Ovary (tissue), 10 donors: ENCODE measurements at regions of chr18 and their contacts with region 1.

Region 1: DNA sequence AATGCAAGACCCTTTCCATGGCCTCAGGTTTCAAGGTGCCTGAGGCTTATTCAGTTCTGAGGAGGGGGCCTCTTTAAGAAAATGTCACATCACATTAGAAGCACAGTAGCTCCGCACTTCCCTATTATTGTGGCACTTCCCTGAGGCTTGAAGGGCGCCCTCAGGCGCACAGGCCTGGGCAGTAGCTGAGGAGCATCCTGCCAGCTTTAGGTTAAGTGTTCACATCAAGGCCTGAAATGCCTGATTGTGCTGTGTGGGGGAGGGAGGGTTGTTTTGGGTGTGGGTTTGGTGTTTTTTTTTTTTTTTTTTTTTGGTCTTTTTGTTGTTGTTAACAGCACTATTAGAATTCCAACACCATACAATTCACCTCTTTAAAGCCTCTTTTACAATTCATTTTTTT is 107.9 kb downstream of the CABLES1 start:
- DNase-seq: no peak
- H3K4me3 ChIP-seq: no peak overlapping the region
- H3K27ac ChIP-seq: no peak overlapping the region
- H3K4me1 ChIP-seq: peaks cover 5% of the 10 kb centered on the region
- H3K27me3 ChIP-seq: no peaks in the 10 kb centered on the region
- CTCF ChIP-seq: no peak
- EP300 ChIP-seq: no peak
- POLR2A ChIP-seq: no peak

Region 2: DNA sequence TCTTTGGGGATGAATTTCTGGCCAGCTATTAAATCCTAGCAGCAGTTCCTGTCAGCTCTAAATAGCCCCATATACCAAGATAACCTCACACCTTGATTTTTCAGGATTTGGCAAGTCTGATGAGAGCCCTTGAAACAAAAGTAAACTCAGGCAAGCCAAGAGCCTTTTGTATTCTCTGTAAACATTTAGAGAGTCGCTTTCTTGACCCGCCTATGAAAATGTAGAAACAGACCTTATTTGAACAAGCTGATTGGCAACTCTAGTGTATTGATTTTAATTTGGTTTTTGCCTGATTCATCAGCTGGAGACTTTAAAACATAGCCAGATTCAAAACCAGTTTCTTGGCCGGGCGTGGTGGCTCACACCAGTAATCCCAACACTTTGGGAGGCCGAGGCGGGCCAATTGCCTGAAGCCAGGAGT is 64.5 kb before region 1 on chr18:
- intact Hi-C with region 1: no loop called
- DNase-seq: no peak
- H3K4me3 ChIP-seq: no peak overlapping the region
- H3K27ac ChIP-seq: no peak overlapping the region
- H3K4me1 ChIP-seq: no peaks in the 10 kb centered on the region
- H3K27me3 ChIP-seq: no peaks in the 10 kb centered on the region
- CTCF ChIP-seq: no peak
- EP300 ChIP-seq: no peak
- POLR2A ChIP-seq: no peak

Region 3: GRCh38 chr18:23356915-23357601 is 113.9 kb after region 1 on chr18:
- intact Hi-C with region 1: loop called in 1 of 4 experiments (anchors 10 kb)
- DNase-seq: peak in 1 of 5 donors; percentile 10
- H3K4me3 ChIP-seq: no peak overlapping the region
- H3K27ac ChIP-seq: no peak overlapping the region
- H3K4me1 ChIP-seq: peaks cover 8% of the 10 kb centered on the region
- H3K27me3 ChIP-seq: no peaks in the 10 kb centered on the region
- CTCF ChIP-seq: no peak
- EP300 ChIP-seq: no peak
- POLR2A ChIP-seq: no peak

Region 4: DNA sequence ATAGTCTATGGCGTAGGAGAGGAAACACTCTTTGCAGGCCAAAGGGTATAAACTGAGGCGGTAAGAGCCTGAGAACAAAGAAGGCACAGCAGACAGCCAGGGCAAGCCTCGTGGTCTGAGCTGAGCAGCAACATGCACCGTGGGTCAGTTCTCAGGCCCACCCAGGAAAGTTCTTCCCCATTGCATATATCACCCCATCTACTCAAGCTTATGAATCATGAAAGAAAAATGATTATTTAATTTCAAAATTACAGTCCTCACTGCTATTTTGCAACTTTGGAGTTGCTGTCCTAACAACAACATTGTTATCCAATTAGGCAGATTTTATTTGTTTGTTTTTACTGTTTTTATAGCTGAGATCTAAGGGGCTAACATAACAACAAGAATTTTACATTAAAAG is 155.2 kb after region 1 on chr18:
- intact Hi-C with region 1: no loop called
- DNase-seq: no peak
- H3K4me3 ChIP-seq: no peak overlapping the region
- H3K27ac ChIP-seq: no peak overlapping the region
- H3K4me1 ChIP-seq: peaks cover 8% of the 10 kb centered on the region
- H3K27me3 ChIP-seq: no peaks in the 10 kb centered on the region
- CTCF ChIP-seq: no peak
- EP300 ChIP-seq: no peak
- POLR2A ChIP-seq: no peak